SK-N-SH (cell line): ENCODE measurements at regions of chr15 and their contacts with region 1.

Region 1: DNA sequence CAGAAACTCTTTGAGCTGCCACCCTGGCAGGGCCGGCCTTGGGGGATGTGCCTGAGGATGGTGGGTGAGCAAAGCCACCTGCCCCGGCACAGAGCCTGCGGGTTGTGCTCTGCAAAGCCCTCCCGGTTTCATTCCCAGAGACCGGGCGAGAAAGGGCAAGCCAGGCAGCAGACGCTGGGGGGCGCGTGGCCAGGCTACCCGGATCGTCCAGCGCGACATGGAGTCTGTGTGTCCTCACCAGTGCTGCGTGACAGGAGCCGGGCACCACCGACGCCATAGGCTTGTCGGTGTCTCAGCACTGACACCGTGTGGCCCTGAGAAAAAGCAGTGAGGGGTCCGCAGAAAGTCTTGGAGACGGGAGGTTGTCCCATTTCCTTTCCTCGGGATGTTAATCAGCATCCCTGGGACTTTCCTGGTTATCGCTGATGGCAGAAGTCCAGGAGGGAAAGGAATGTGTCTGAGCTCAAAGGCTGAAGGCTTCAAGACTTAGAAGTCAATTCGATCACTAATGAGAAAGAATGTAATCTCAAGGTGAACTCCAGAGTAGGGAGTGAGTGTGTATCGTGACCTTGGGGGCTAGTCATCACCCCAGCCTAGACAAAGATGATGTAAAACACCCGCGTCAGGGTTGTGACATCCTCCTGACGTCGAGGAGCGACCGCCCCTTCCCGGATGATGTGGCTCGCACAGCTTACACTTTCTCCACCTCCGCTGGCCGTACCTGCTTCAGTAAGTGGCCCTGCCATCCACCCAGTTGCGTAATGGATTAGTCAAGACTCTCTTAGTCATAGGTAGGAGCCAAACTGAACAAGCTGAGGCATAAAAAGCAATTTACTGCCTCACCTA is 36.3 kb upstream of the PLA2G4E start:
- DNase-seq: peak; percentile 90
- H3K4me3 ChIP-seq: peak overlapping the region; percentile 30 to 47
- H3K27ac ChIP-seq: no peak overlapping the region
- H3K4me1 ChIP-seq: peaks cover 0 to 8% of the 10 kb centered on the region in 2 experiments; a peak in 2 of 4 replicates
- H3K27me3 ChIP-seq: peaks cover 11% of the 10 kb centered on the region; the same call in 1 of the 2 replicates
- CTCF ChIP-seq: peak; percentile 63
- EP300 ChIP-seq: no peak
- RAD21 ChIP-seq: peak; percentile 72

Region 2: GRCh38 chr15:41894791-41895463 is 162.2 kb before region 1 on chr15:
- CTCF ChIA-PET with region 1: no interaction called
- POLR2A ChIA-PET with region 1: no interaction called
- DNase-seq: peak; percentile 97
- H3K4me3 ChIP-seq: peak overlapping the region; percentile 14 to 25; a peak in 2 of 4 replicates
- H3K27ac ChIP-seq: peak overlapping the region; percentile 65 to 97
- H3K4me1 ChIP-seq: peaks cover 12 to 45% of the 10 kb centered on the region in 2 experiments; a peak in 3 of 4 replicates
- H3K27me3 ChIP-seq: no peaks in the 10 kb centered on the region
- CTCF ChIP-seq: peak; percentile 36
- EP300 ChIP-seq: peak in 1 of 2 experiments; percentile 70; a peak in 1 of 4 replicates
- RAD21 ChIP-seq: peak; percentile 24

Region 3: GRCh38 chr15:41999290-42000285 is 57.6 kb before region 1 on chr15:
- CTCF ChIA-PET with region 1: interaction called, 46 read pairs
- POLR2A ChIA-PET with region 1: no interaction called
- DNase-seq: no peak
- H3K4me3 ChIP-seq: no peak overlapping the region
- H3K27ac ChIP-seq: no peak overlapping the region
- H3K4me1 ChIP-seq: no peaks in the 10 kb centered on the region; a peak in 1 of 4 replicates
- H3K27me3 ChIP-seq: peaks cover 10% of the 10 kb centered on the region
- CTCF ChIP-seq: no peak
- EP300 ChIP-seq: no peak
- RAD21 ChIP-seq: no peak

Region 4: DNA sequence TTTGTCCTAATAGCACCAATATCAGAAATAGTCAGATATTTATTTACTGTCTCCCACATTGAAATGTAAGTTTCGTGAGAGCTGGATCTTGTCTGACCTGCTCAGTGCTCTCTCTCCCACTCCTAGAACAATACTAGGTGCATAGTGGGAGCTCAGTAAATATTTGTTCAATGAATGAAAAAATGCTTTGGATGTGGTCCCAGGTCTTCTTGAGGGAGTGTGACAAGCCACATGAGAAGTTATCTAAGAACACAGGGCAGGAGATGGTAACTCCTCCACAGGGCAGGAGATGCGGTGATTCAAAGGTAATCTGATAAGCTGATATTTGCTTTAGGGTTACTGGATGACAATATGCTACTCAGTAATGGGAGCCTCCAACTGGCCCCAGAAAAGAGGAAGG is 10.6 kb before region 1 on chr15:
- CTCF ChIA-PET with region 1: interaction called, 30 read pairs
- POLR2A ChIA-PET with region 1: no interaction called
- DNase-seq: no peak
- H3K4me3 ChIP-seq: no peak overlapping the region
- H3K27ac ChIP-seq: no peak overlapping the region
- H3K4me1 ChIP-seq: no peaks in the 10 kb centered on the region; a peak in 1 of 4 replicates
- H3K27me3 ChIP-seq: peaks cover 10% of the 10 kb centered on the region; the same call in 1 of the 2 replicates
- CTCF ChIP-seq: no peak
- EP300 ChIP-seq: no peak
- RAD21 ChIP-seq: no peak